ENCODE measurements at regions of chr6 and their contacts with region 1.

Region 1: DNA sequence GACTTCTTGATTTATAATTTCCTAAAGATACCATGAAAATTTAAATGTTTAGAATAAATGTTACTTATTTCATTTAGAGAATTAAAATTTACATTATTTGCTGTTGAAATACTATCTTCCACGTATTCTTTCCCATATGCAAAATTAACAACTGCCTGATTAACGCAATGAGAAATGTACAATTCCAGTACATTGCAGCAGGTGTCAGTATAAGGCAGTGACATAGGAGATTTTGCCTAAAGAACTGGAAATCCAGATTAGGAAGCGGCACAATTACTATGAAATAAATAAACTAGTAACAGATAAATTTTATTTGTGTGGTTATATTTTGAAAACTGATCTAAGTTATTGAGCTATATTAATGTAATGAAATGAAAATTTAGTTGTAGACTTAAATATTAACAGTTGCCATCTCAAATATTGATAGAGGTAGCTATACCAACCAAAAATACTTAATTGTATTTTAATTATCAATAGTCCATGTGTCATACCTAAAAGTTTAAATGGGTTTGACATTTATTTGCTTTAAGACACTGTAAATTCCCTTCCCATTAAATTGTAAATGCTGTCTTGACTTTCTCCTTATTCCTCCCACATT is 300.2 kb downstream of the UTRN start:
- DNase-seq: no peak

Region 2: DNA sequence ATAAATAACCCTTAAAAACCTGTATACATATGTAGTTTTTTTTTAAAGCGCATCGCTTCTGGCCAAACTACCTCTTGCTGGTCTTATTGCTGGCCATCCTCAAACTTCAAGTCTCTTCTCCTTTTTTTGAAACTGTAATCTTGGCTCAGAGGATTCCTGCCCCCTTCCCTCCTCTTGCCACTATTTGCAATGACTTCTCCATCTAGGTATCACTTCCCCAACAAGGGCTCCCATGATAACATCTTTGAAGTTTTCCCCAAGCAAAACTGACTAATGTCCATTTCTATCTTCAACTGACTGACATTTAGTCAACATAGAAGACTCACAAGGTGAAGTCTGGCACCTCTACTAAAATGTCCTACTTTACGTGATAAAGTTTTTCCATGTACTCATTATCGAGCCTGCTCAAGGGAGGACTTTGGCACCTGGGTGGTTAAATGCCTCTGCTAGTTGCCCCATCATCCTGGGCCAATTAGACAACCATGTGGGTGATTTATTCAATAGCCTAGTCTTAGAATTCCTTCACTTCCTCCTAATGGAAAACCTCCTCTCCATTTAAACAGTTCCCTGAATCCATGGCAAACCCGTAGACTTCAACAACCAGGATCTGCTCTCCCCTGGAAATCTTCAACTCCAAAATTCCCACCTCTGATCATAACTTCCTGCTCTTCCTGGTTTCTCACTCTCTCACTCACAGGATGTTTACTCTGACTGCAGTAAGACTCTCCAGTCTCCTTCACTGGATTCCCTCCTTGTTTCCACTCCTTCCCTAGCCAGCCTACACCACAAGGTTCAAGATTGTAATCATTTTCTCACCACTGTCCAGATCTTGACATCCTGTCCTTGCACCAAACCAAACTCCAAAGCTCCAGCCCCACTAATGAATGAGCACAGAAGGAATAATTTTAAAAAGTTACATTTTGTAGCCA is 567.9 kb before region 1 on chr6:
- intact Hi-C with region 1: no loop called
- DNase-seq: no peak

Region 3: DNA sequence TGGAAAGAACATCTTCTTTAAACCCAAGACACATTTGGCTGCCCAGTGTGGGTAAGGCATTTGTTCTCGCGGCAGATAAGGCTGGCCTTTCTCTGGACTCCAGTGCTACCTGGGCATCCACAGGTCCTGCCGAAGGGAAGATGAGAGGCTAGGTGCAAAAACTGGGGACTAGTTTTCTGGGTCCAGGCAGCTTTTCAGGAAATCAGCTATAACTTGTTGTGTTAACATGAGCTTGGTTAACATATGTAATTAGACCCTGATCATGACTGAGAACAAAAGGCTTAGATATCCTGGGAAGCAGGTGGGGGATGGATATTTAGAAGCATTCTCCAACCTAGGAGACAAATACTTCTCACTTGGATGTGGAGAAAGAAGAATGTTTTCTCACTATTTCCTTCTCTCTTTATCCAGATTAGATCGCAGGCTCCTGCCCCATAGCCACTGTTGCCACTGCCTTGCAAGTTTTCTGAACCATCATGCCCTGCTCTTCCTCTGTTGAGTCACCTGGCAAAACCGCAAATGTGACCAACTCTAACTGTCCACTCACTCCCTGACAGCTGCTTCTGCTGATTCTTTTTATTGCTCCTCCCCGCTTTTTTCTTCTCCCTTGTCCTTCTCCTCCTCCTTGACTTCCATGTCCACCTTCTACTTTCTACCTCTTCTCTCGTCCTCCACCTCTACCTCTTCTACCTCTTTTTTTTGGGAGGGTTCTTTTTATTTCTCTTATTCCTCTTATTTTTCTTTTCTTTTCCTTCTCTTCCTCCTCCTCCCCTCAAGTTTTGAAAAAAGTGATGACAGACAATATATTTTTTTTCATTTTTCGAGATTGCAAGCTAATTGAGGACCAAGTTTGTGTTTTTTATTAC is 42.1 kb before region 1 on chr6:
- intact Hi-C with region 1: no loop called
- DNase-seq: no peak

Region 4: DNA sequence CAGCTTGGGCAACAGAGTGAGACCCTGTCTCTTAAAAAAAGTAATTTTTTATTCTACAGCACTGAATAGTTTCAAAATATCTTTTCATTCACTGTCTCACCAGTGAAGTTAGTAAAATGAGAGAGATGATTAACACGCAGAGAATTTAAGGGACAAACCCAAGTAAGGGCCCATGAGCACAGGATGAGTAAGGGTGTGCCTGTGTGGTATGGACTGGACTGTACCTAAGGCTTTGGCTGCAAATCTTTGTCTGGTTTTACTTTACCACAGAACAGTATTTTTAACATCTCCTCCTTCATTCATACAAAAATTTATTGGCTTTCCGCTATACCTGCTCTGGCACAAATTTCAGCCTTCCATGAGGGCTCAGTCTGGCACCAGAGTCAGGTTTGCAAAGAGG is 133.1 kb after region 1 on chr6:
- intact Hi-C with region 1: no loop called
- DNase-seq: no peak

Region 5: GRCh38 chr6:144769142-144769541 is 183.8 kb after region 1 on chr6:
- intact Hi-C with region 1: no loop called
- DNase-seq: no peak

Region 6: DNA sequence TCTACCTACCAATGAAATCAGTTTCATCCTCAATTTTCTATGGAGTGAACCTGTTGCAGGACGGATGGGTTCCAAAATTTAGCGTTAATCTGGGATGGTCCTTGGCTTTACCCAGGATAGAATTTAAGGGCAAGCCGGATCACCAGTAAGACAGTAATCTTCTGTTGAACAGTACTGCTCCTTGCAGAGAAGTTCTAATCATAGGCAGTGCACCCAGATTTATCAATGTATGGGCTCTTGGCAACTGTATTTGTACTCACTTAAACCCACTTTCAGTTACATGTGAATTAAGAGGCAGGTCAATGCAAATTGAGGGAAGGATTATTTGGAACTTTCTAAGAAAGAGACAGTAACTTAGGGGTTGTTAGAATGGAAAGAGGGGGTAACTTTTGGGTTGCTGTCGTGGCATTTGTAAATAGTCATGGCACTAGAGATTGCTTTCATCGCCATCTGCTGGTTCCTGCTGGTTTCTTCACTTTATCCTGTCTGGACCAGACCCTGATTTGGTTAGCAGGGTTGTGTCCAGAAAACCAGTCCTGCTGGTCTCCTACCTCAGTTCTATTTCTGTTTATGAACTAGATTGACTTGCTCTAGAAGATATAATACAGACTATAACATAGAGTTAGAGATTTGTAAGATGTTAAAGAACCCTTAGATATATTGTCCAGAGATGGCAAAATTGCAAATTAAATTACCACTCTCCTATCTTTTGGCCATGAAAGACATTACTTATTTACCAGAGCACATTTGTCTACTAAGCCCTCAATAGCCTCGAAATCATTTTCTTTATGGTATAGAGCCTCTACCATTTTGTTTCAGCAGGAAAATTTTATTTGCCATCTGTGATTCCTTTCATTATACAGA is 346.1 kb after region 1 on chr6:
- intact Hi-C with region 1: loop called (anchors 2 kb)
- DNase-seq: no peak

Region 7: GRCh38 chr6:145214570-145214969 is 629.3 kb after region 1 on chr6:
- intact Hi-C with region 1: loop called (anchors 5 kb)
- DNase-seq: no peak

Region 8: DNA sequence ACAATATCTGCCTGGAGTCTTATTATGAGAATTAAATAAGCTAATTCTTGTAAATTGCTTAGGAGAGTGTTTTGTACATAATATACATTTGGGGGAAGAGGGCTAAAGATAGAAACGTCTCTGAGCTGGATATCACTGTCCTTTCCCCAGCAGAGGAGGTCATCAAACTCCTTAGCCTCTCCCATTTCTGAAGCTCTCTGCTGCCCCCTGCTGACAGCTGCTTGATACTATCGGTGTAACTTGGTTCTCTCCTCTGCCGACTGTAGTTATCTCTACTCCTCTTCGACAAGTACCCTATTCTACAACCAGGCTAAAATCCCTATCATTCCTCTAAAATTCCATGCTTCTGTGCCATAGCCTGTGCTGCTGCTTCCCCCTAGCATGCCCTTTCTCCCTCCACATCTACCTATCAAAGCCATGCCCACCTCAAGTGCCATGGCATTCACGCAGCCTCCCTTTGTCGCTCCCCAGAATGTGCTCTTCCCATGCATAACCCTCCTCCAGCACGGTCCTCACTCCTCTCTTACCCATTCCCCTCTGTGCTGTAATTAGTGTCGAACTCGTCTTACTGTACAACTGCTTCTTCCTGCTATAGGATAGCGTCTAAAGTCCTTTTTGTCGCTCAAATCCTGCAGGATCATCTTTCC is 1048.8 kb after region 1 on chr6:
- intact Hi-C with region 1: loop called (anchors 5 kb)
- DNase-seq: peak; percentile 85